ENCODE measurements at regions of chr11 and their contacts with region 1.

Region 1: GRCh38 chr11:68993966-68994893 is 13.4 kb upstream of the MRGPRD start:
- DNase-seq: no peak
- H3K4me3 ChIP-seq: no peak overlapping the region
- H3K27ac ChIP-seq: no peak overlapping the region
- H3K4me1 ChIP-seq: peaks cover 10% of the 10 kb centered on the region
- H3K27me3 ChIP-seq: no peaks in the 10 kb centered on the region
- CTCF ChIP-seq: no peak

Region 2: DNA sequence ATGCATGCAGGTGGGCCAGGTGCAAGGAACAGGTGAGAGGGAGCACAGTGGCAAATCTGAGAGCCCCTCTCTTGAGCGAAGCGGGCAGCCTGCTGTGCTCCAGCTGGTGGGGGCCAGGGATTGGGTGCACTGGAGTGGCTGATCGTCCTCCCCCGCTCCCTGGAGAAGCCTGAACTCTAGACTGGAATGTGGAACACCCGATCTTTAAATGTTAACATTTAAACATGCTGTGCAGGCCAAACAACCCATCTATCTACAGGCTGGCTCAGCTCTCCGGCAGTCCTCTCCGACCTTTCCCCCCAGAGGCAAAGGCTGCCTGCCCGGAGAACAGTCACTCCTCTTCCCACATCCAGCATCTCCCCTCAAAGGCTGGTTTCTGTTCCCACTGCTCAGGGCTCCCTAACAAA is 13.7 kb after region 1 on chr11:
- CTCF ChIA-PET with region 1: no interaction called
- POLR2A ChIA-PET with region 1: interaction called, 11 read pairs
- intact Hi-C with region 1: no loop called
- DNase-seq: no peak
- H3K4me3 ChIP-seq: no peak overlapping the region
- H3K27ac ChIP-seq: no peak overlapping the region
- H3K4me1 ChIP-seq: peaks cover 21% of the 10 kb centered on the region
- H3K27me3 ChIP-seq: no peaks in the 10 kb centered on the region
- CTCF ChIP-seq: no peak